B cell (primary cell): ENCODE measurements at regions of chr6 and their contacts with region 1.

Region 1: DNA sequence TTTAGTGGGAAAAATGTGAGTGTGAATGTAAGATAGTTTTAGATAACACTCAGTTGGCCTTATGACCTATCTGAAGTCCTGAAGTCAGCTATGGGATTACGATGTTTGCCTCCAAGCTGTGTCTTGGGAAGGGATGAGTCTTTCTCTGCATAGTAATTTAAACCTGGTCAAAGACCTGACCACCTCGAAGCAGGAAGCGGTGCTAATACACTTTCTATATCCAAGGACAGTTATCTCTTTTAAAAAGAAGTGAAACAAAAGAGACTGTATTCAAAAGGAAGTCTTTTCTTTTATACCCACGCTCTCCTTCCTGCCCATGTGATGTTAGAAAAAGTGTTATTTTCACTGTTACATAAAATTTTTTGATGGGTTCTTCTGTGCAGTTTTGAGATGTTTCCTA is 94.9 kb downstream of the JARID2 start:
- DNase-seq: peak; percentile 30
- ATAC-seq: no peak
- H3K4me3 ChIP-seq: peak overlapping the region in 2 of 5 experiments; percentile 18 to 37
- H3K4me3 Mint-ChIP-seq: peak overlapping the region; percentile 58
- H3K27ac ChIP-seq: peak overlapping the region; percentile 5 to 74
- H3K27ac Mint-ChIP-seq: peak overlapping the region; percentile 4
- H3K4me1 ChIP-seq: peaks cover 58 to 75% of the 10 kb centered on the region in 2 donors
- H3K4me1 Mint-ChIP-seq: peaks cover 85% of the 10 kb centered on the region
- H3K27me3 ChIP-seq: no peaks in the 10 kb centered on the region
- H3K27me3 Mint-ChIP-seq: no peaks in the 10 kb centered on the region
- CTCF ChIP-seq: no peak

Region 2: GRCh38 chr6:15355683-15356099 is 14.9 kb after region 1 on chr6:
- CTCF ChIA-PET with region 1: interaction called, 4 read pairs
- POLR2A ChIA-PET with region 1: interaction called, 3 read pairs
- intact Hi-C with region 1: loop called (anchors 2 kb)
- DNase-seq: no peak
- ATAC-seq: no peak
- H3K4me3 ChIP-seq: no peak overlapping the region
- H3K4me3 Mint-ChIP-seq: no peak overlapping the region
- H3K27ac ChIP-seq: no peak overlapping the region
- H3K27ac Mint-ChIP-seq: no peak overlapping the region
- H3K4me1 ChIP-seq: peaks cover 36 to 43% of the 10 kb centered on the region in 2 donors
- H3K4me1 Mint-ChIP-seq: peaks cover 69% of the 10 kb centered on the region
- H3K27me3 ChIP-seq: no peaks in the 10 kb centered on the region
- H3K27me3 Mint-ChIP-seq: no peaks in the 10 kb centered on the region
- CTCF ChIP-seq: no peak

Region 3: GRCh38 chr6:16849280-16849987 is 1508.7 kb after region 1 on chr6:
- CTCF ChIA-PET with region 1: no interaction called
- POLR2A ChIA-PET with region 1: no interaction called
- intact Hi-C with region 1: no loop called
- DNase-seq: no peak
- ATAC-seq: no peak
- H3K4me3 ChIP-seq: no peak overlapping the region
- H3K4me3 Mint-ChIP-seq: no peak overlapping the region
- H3K27ac ChIP-seq: no peak overlapping the region
- H3K27ac Mint-ChIP-seq: no peak overlapping the region
- H3K4me1 ChIP-seq: no peaks in the 10 kb centered on the region
- H3K4me1 Mint-ChIP-seq: peaks cover 2% of the 10 kb centered on the region
- H3K27me3 ChIP-seq: peaks cover 0 to 6% (median 3%) of the 10 kb centered on the region in 4 experiments
- H3K27me3 Mint-ChIP-seq: peaks cover 39% of the 10 kb centered on the region
- CTCF ChIP-seq: no peak